PC-3 (cell line): ENCODE measurements at regions of chr15 and their contacts with region 1.

Region 1: GRCh38 chr15:75578948-75579920 is at the start of gene PTPN9:
- DNase-seq: peak; percentile 65
- ATAC-seq: peak; percentile 70
- H3K4me3 ChIP-seq: peak within 1 kb of the TSS; percentile 97
- H3K27ac ChIP-seq: peak within 1 kb of the TSS; percentile 26
- H3K4me1 ChIP-seq: peaks cover 13% of the 10 kb centered on the region
- H3K27me3 ChIP-seq: no peaks in the 10 kb centered on the region
- CTCF ChIP-seq: peak; percentile 42; the same call in 1 of the 2 replicates
- total RNA-seq, gene PTPN9: 9.1 and 15.7 TPM in 2 replicates

Region 2: GRCh38 chr15:75493732-75494131 is 85.5 kb before region 1 on chr15:
- CTCF ChIA-PET with region 1: no interaction called
- POLR2A ChIA-PET with region 1: no interaction called
- intact Hi-C with region 1: no loop called
- DNase-seq: peak; percentile 60
- ATAC-seq: peak; percentile 82
- H3K4me3 ChIP-seq: no peak overlapping the region
- H3K27ac ChIP-seq: no peak overlapping the region
- H3K4me1 ChIP-seq: peaks cover 9% of the 10 kb centered on the region
- H3K27me3 ChIP-seq: no peaks in the 10 kb centered on the region
- CTCF ChIP-seq: no peak

Region 3: GRCh38 chr15:75508840-75509532 is 70.2 kb before region 1 on chr15:
- CTCF ChIA-PET with region 1: interaction called, 4 read pairs
- POLR2A ChIA-PET with region 1: no interaction called
- intact Hi-C with region 1: loop called (anchors 1 kb)
- DNase-seq: peak; percentile 58
- ATAC-seq: peak; percentile 45
- H3K4me3 ChIP-seq: no peak overlapping the region
- H3K27ac ChIP-seq: no peak overlapping the region
- H3K4me1 ChIP-seq: no peaks in the 10 kb centered on the region
- H3K27me3 ChIP-seq: no peaks in the 10 kb centered on the region
- CTCF ChIP-seq: peak; percentile 72

Region 4: GRCh38 chr15:75625542-75626347 is 46.5 kb after region 1 on chr15 and contains the start of gene SNUPN:
- CTCF ChIA-PET with region 1: no interaction called
- POLR2A ChIA-PET with region 1: no interaction called
- intact Hi-C with region 1: loop called (anchors 5 kb)
- DNase-seq: peak; percentile 80
- ATAC-seq: peak; percentile 73
- H3K4me3 ChIP-seq: peak within 1 kb of the TSS; percentile 93
- H3K27ac ChIP-seq: peak within 1 kb of the TSS; percentile 78
- H3K4me1 ChIP-seq: peaks cover 24% of the 10 kb centered on the region
- H3K27me3 ChIP-seq: no peaks in the 10 kb centered on the region
- CTCF ChIP-seq: no peak
- total RNA-seq, gene SNUPN: 7.9 and 13.5 TPM in 2 replicates

Region 5: DNA sequence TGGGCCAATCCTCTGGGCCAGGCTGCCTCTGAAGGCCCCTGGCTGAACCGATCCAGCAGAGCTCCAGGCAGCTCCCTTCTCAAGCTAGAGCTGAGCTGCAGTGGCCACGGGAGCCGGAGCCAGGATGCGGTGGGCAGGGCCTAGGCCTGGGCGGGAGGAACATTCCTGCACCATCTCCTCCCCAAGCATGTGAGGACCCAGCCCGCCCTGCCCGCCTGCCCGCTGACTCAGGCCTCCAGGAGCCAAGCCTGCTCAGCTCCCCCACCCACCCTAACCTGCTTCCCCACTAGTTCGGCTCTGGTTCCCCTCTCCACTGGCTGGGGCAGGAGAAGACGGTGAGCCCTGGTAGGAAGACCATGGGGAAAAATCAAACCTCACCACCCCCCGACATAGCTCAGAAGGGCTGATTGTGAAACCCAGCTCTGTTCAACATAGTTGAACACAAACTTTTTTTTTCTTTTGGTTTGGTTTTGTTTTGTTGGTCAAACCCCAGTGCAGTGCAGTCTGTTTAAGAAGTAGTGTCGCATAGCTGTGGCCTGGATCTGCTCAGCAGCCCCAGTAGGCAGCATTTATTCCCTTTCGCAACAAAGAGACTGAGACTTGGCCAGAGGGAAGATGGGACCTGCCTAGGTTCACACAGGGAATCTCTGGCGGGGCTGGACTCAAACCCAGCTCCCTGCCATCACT is 82.0 kb after region 1 on chr15:
- CTCF ChIA-PET with region 1: no interaction called
- POLR2A ChIA-PET with region 1: no interaction called
- intact Hi-C with region 1: no loop called
- DNase-seq: peak; percentile 86
- ATAC-seq: peak; percentile 97
- H3K4me3 ChIP-seq: no peak overlapping the region
- H3K27ac ChIP-seq: peak overlapping the region; percentile 63
- H3K4me1 ChIP-seq: peaks cover 32% of the 10 kb centered on the region
- H3K27me3 ChIP-seq: no peaks in the 10 kb centered on the region
- CTCF ChIP-seq: no peak